Thyroid gland (tissue), 4 donors: ENCODE measurements at regions of chr14 and their contacts with region 1.

Region 1: GRCh38 chr14:24366721-24367513 is 1.1 kb upstream of the NFATC4 start:
- DNase-seq: peak; percentile 96 to 97
- H3K4me3 ChIP-seq: peak overlapping the region; percentile 24 to 80 (median 32)
- H3K27ac ChIP-seq: peak overlapping the region; percentile 94 to 96 (median 95)
- H3K4me1 ChIP-seq: peaks cover 17 to 19% of the 10 kb centered on the region in 2 donors
- H3K27me3 ChIP-seq: no peaks in the 10 kb centered on the region
- CTCF ChIP-seq: peak in 1 of 6 experiments; percentile 14
- POLR2A ChIP-seq: peak in 1 of 2 donors; percentile 44

Region 2: GRCh38 chr14:24332268-24332993 is 34.5 kb before region 1 on chr14:
- intact Hi-C with region 1: loop called (anchors 5 kb)
- DNase-seq: peak; percentile 82 to 83
- H3K4me3 ChIP-seq: peak overlapping the region in 1 of 3 donors; percentile 19
- H3K27ac ChIP-seq: peak overlapping the region in 1 of 3 donors; percentile 44
- H3K4me1 ChIP-seq: peaks cover 21 to 55% of the 10 kb centered on the region in 2 donors
- H3K27me3 ChIP-seq: no peaks in the 10 kb centered on the region
- CTCF ChIP-seq: peak; percentile 53 to 87 (median 73)
- POLR2A ChIP-seq: no peak

Region 3: GRCh38 chr14:24377657-24378056 is 10.7 kb after region 1 on chr14:
- intact Hi-C with region 1: no loop called
- DNase-seq: peak; percentile 70 to 86
- H3K4me3 ChIP-seq: no peak overlapping the region
- H3K27ac ChIP-seq: peak overlapping the region in 2 of 3 donors; percentile 35 to 48
- H3K4me1 ChIP-seq: peaks cover 8 to 38% of the 10 kb centered on the region in 2 donors
- H3K27me3 ChIP-seq: no peaks in the 10 kb centered on the region
- CTCF ChIP-seq: no peak
- POLR2A ChIP-seq: no peak

Region 4: DNA sequence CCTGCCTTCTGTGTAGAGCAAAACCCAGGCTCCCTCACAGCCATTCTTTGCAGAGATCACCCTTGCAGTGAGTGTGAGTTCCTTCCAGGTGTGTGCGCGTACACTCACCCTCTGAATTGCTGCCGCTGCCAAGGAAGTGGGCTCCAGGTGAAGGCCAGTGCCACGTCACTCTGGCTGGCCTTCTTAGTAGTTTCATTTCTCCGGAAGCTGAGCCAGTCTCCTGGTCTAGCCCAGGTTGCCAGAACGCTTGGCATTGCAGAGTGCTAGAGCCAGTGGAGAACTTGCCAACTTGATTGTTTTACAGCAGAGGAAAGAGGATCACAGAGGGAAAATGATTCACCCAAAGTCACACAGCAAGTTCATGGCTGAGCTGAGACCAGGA is 51.6 kb after region 1 on chr14:
- intact Hi-C with region 1: no loop called
- DNase-seq: peak; percentile 62 to 67
- H3K4me3 ChIP-seq: no peak overlapping the region
- H3K27ac ChIP-seq: no peak overlapping the region
- H3K4me1 ChIP-seq: peaks cover 2 to 13% of the 10 kb centered on the region in 2 donors
- H3K27me3 ChIP-seq: no peaks in the 10 kb centered on the region
- CTCF ChIP-seq: no peak
- POLR2A ChIP-seq: no peak